Activated B cell treated with CpG ODN at 0.5 μM for 24 hours (primary cell): ENCODE measurements at regions of chr4 and their contacts with region 1.

Region 1: GRCh38 chr4:113636438-113636818 is 125.1 kb downstream of the CAMK2D start:
- DNase-seq: no peak
- ATAC-seq: peak; percentile 73
- H3K4me3 Mint-ChIP-seq: peak overlapping the region; percentile 49
- H3K27ac Mint-ChIP-seq: peak overlapping the region; percentile 88
- H3K4me1 Mint-ChIP-seq: peaks cover 76% of the 10 kb centered on the region
- H3K27me3 Mint-ChIP-seq: no peaks in the 10 kb centered on the region
- CTCF ChIP-seq: no peak

Region 2: GRCh38 chr4:113618205-113618604 is 18.2 kb before region 1 on chr4:
- CTCF ChIA-PET with region 1: interaction called, 3 read pairs
- POLR2A ChIA-PET with region 1: interaction called, 7 read pairs
- intact Hi-C with region 1: loop called (anchors 1 kb)
- DNase-seq: no peak
- ATAC-seq: peak; percentile 83
- H3K4me3 Mint-ChIP-seq: no peak overlapping the region
- H3K27ac Mint-ChIP-seq: no peak overlapping the region
- H3K4me1 Mint-ChIP-seq: peaks cover 48% of the 10 kb centered on the region
- H3K27me3 Mint-ChIP-seq: no peaks in the 10 kb centered on the region
- CTCF ChIP-seq: no peak

Region 3: DNA sequence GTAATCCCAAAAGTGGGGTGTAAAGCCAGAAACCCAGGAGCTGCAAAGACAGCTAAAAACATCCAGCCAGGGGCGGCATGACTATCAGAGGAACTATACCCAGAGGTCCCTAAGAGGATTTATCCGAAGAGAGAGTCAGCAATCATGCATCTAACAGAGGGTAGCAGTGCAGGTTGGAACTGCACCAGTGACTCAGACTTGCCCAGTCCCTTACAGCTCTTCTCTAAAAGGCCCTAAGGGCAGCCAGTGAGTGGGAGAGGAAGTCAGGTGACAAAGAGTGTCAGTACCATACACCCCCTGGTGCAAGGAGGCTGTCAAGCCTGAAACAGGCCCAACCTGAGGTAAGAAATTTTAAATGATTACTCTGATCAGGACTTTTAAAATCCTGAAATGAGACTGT is 37.0 kb after region 1 on chr4:
- CTCF ChIA-PET with region 1: interaction called, 8 read pairs
- POLR2A ChIA-PET with region 1: interaction called, 4 read pairs
- intact Hi-C with region 1: loop called (anchors 1 kb)
- DNase-seq: peak; percentile 14
- ATAC-seq: peak; percentile 95
- H3K4me3 Mint-ChIP-seq: peak overlapping the region; percentile 41
- H3K27ac Mint-ChIP-seq: peak overlapping the region; percentile 53
- H3K4me1 Mint-ChIP-seq: peaks cover 54% of the 10 kb centered on the region
- H3K27me3 Mint-ChIP-seq: no peaks in the 10 kb centered on the region
- CTCF ChIP-seq: no peak

Region 4: GRCh38 chr4:113837397-113837796 is 201.0 kb after region 1 on chr4:
- CTCF ChIA-PET with region 1: no interaction called
- POLR2A ChIA-PET with region 1: no interaction called
- intact Hi-C with region 1: loop called (anchors 2 kb)
- DNase-seq: no peak
- ATAC-seq: peak; percentile 98
- H3K4me3 Mint-ChIP-seq: no peak overlapping the region
- H3K27ac Mint-ChIP-seq: peak overlapping the region; percentile 64
- H3K4me1 Mint-ChIP-seq: peaks cover 24% of the 10 kb centered on the region
- H3K27me3 Mint-ChIP-seq: no peaks in the 10 kb centered on the region
- CTCF ChIP-seq: no peak

Region 5: DNA sequence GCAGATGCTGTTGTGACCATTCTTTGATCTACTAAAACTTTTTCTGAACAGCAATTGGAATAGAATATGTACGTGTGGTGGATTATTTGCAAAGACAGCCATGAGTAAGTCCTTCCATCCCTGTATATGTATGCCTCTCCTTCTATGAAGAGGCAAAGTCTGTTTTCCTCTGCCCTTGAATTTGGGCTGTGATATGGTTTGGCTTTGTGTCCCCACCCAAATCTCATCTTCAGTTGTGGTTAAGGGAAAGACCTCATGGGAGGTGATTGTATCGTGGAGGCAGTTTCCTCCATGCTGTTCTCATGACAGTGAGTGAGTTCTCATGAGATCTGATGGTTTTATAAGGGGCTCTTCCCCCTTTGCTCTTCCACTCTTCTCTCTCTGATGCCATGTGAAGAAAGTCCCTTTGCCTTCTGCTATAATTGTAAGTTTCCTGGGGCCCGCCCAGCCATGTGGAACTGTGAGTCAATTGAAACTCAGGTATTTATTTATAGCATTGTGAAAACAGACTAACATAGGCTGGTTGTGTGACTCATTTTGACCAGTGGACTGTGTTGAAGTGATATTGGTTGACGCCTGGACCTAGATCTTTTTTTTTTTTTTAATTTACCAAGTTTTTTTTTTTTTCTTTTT is 233.4 kb after region 1 on chr4:
- CTCF ChIA-PET with region 1: no interaction called
- POLR2A ChIA-PET with region 1: no interaction called
- intact Hi-C with region 1: no loop called
- DNase-seq: peak; percentile 40
- ATAC-seq: peak; percentile 94
- H3K4me3 Mint-ChIP-seq: peak overlapping the region; percentile 63
- H3K27ac Mint-ChIP-seq: peak overlapping the region; percentile 90
- H3K4me1 Mint-ChIP-seq: peaks cover 19% of the 10 kb centered on the region
- H3K27me3 Mint-ChIP-seq: no peaks in the 10 kb centered on the region
- CTCF ChIP-seq: no peak

Region 6: GRCh38 chr4:114386637-114387233 is 750.3 kb after region 1 on chr4:
- CTCF ChIA-PET with region 1: no interaction called
- POLR2A ChIA-PET with region 1: no interaction called
- intact Hi-C with region 1: loop called (anchors 2 kb)
- DNase-seq: no peak
- ATAC-seq: peak; percentile 40
- H3K4me3 Mint-ChIP-seq: no peak overlapping the region
- H3K27ac Mint-ChIP-seq: no peak overlapping the region
- H3K4me1 Mint-ChIP-seq: no peaks in the 10 kb centered on the region
- H3K27me3 Mint-ChIP-seq: peaks cover 16% of the 10 kb centered on the region
- CTCF ChIP-seq: peak; percentile 80